Activated B cell treated with CpG ODN at 0.5 μM for 24 hours (primary cell): ENCODE measurements at regions of chr14 and their contacts with region 1.

Region 1: GRCh38 chr14:88792572-88793258 is at the start of gene EML5:
- DNase-seq: peak; percentile 81
- ATAC-seq: peak; percentile 86
- H3K4me3 Mint-ChIP-seq: peak within 1 kb of the TSS; percentile 89
- H3K27ac Mint-ChIP-seq: peak within 1 kb of the TSS; percentile 71
- H3K4me1 Mint-ChIP-seq: peaks cover 24% of the 10 kb centered on the region
- H3K27me3 Mint-ChIP-seq: no peaks in the 10 kb centered on the region
- CTCF ChIP-seq: no peak
- total RNA-seq, gene EML5: 3.8 and 5.0 TPM in 2 replicates

Region 2: GRCh38 chr14:87992718-87993628 is 799.7 kb before region 1 on chr14 and contains the start of gene GALC:
- CTCF ChIA-PET with region 1: no interaction called
- POLR2A ChIA-PET with region 1: no interaction called
- intact Hi-C with region 1: loop called (anchors 5 kb)
- DNase-seq: peak; percentile 89
- ATAC-seq: peak; percentile 80
- H3K4me3 Mint-ChIP-seq: peak within 1 kb of the TSS; percentile 89
- H3K27ac Mint-ChIP-seq: peak within 1 kb of the TSS; percentile 99
- H3K4me1 Mint-ChIP-seq: peaks cover 41% of the 10 kb centered on the region
- H3K27me3 Mint-ChIP-seq: no peaks in the 10 kb centered on the region
- CTCF ChIP-seq: no peak
- total RNA-seq, gene GALC: 8.3 and 9.7 TPM in 2 replicates

Region 3: GRCh38 chr14:88492272-88493089 is 300.2 kb before region 1 on chr14:
- CTCF ChIA-PET with region 1: interaction called, 3 read pairs
- POLR2A ChIA-PET with region 1: no interaction called
- intact Hi-C with region 1: loop called (anchors 5 kb)
- DNase-seq: peak; percentile 16
- ATAC-seq: peak; percentile 72
- H3K4me3 Mint-ChIP-seq: no peak overlapping the region
- H3K27ac Mint-ChIP-seq: no peak overlapping the region
- H3K4me1 Mint-ChIP-seq: peaks cover 2% of the 10 kb centered on the region
- H3K27me3 Mint-ChIP-seq: no peaks in the 10 kb centered on the region
- CTCF ChIP-seq: no peak

Region 4: GRCh38 chr14:88775513-88775927 is 17.2 kb before region 1 on chr14:
- CTCF ChIA-PET with region 1: no interaction called
- POLR2A ChIA-PET with region 1: no interaction called
- intact Hi-C with region 1: no loop called
- DNase-seq: no peak
- ATAC-seq: no peak
- H3K4me3 Mint-ChIP-seq: no peak overlapping the region
- H3K27ac Mint-ChIP-seq: no peak overlapping the region
- H3K4me1 Mint-ChIP-seq: peaks cover 3% of the 10 kb centered on the region
- H3K27me3 Mint-ChIP-seq: no peaks in the 10 kb centered on the region
- CTCF ChIP-seq: no peak

Region 5: GRCh38 chr14:88824314-88825077 is 31.8 kb after region 1 on chr14 and contains the start of gene TTC8:
- CTCF ChIA-PET with region 1: interaction called, 4 read pairs
- POLR2A ChIA-PET with region 1: interaction called, 8 read pairs
- intact Hi-C with region 1: loop called (anchors 1 kb)
- DNase-seq: peak; percentile 77
- ATAC-seq: peak; percentile 97
- H3K4me3 Mint-ChIP-seq: peak within 1 kb of the TSS; percentile 88
- H3K27ac Mint-ChIP-seq: peak within 1 kb of the TSS; percentile 100
- H3K4me1 Mint-ChIP-seq: peaks cover 14% of the 10 kb centered on the region
- H3K27me3 Mint-ChIP-seq: peaks cover 11% of the 10 kb centered on the region
- CTCF ChIP-seq: no peak
- total RNA-seq, gene TTC8: 4.8 and 6.0 TPM in 2 replicates

Region 6: DNA sequence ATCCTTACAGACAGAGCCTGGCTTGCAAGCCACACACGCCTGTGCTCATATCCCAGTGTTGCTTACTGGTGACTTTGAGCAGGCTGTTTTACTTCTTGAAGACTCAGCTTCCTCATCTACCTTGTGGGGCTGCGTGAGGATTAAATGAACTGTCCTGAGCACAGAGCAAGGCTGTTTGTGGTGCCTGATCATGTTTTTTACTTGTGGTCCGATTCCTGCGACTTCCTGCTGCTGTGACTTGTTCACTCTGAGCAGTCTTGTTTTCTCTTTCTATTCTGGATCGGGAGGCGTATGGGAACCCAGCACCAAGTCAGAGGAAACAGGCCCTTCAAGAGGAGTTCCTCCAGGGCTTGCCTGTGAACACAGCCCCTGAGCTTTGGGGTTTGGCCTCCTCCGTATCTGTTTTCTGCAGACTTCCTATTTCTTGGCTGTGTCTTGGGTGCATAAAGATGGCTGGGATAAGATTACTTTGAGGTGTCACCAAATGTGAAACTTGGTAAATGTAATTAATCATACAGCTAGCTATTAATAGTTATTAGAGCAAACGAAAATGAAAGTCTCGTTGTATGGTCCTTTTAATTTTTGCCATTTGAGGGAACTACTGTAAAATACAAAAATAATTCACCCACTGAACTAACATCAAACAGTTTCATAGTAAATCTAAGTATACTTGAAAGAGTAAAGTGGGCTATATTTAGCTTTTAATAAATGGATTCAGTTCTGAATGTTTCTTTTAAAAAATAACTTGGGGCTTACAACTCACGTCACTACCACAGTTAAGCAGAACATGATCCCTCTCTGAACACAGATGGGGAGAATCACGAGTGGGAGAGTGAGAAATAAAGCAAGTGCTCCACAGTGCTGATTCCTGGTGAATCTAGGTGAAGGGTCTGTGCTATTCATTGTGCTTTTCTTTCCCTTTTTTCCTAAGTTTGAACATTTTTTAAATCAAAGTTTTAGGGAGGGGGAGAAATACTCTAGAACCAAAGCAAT is 372.8 kb after region 1 on chr14:
- CTCF ChIA-PET with region 1: no interaction called
- POLR2A ChIA-PET with region 1: no interaction called
- intact Hi-C with region 1: loop called (anchors 2 kb)
- DNase-seq: no peak
- ATAC-seq: peak; percentile 66
- H3K4me3 Mint-ChIP-seq: peak overlapping the region; percentile 83
- H3K27ac Mint-ChIP-seq: peak overlapping the region; percentile 90
- H3K4me1 Mint-ChIP-seq: peaks cover 36% of the 10 kb centered on the region
- H3K27me3 Mint-ChIP-seq: no peaks in the 10 kb centered on the region
- CTCF ChIP-seq: no peak

Region 7: GRCh38 chr14:90256354-90257131 is 1463.8 kb after region 1 on chr14 and contains the start of gene PSMC1:
- CTCF ChIA-PET with region 1: no interaction called
- POLR2A ChIA-PET with region 1: interaction called, 3 read pairs
- intact Hi-C with region 1: loop called (anchors 5 kb)
- DNase-seq: peak; percentile 76
- ATAC-seq: peak; percentile 94
- H3K4me3 Mint-ChIP-seq: peak within 1 kb of the TSS; percentile 98
- H3K27ac Mint-ChIP-seq: peak within 1 kb of the TSS; percentile 92
- H3K4me1 Mint-ChIP-seq: peaks cover 40% of the 10 kb centered on the region
- H3K27me3 Mint-ChIP-seq: no peaks in the 10 kb centered on the region
- CTCF ChIP-seq: no peak
- total RNA-seq, gene PSMC1: 101 and 102 TPM in 2 replicates

Region 8: GRCh38 chr14:90331497-90332435 is 1539.1 kb after region 1 on chr14 and contains the start of gene NRDE2:
- CTCF ChIA-PET with region 1: no interaction called
- POLR2A ChIA-PET with region 1: no interaction called
- intact Hi-C with region 1: loop called (anchors 10 kb)
- DNase-seq: peak; percentile 95
- ATAC-seq: peak; percentile 98
- H3K4me3 Mint-ChIP-seq: peak within 1 kb of the TSS; percentile 93
- H3K27ac Mint-ChIP-seq: peak within 1 kb of the TSS; percentile 95
- H3K4me1 Mint-ChIP-seq: peaks cover 25% of the 10 kb centered on the region
- H3K27me3 Mint-ChIP-seq: peaks cover 19% of the 10 kb centered on the region
- CTCF ChIP-seq: no peak
- total RNA-seq, gene NRDE2: 35.3 and 37.1 TPM in 2 replicates